Cardiac septum (tissue), 1 donor: ENCODE measurements at regions of chr1 and their contacts with region 1.

Region 1: GRCh38 chr1:110407260-110408210 is at the start of gene LAMTOR5:
- DNase-seq: peak; percentile 97
- total RNA-seq, gene LAMTOR5: 195 TPM

Region 2: DNA sequence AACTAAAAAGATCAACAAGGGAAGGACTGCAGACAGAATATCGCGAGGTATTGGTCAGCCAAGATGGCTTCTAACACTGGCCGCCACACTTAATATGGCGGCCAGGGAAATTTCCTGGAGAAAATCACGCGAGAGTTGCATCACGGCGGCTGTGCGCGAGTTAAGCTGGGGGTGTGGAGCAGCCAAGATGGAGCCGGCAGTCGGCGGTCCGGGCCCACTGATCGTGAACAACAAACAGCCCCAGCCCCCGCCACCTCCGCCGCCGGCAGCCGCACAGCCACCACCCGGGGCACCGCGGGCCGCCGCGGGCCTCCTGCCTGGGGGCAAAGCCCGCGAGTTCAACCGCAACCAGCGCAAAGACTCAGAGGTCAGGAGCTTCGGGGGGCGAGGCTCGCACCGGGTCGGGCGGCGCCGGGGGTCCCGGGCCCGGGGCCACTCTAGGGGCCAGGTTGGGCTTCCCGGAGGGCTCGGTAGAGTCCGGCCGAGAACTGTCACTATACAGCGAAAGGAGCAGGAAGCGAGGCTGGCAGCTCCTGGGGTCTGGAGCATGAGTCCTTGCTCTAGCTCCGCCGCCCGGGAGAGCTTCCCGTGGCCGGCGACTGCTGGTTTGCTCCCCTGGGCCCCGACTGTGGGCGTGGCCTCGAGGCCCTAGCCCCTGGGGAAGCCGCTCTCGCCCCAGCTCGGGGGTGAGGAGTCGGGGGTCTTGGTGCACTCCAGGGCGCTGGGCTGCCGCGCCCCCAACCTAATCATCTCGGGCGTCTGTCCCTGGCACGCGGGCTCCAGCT is 372.9 kb before region 1 on chr1 and contains the start of gene STRIP1:
- intact Hi-C with region 1: loop called (anchors 5 kb)
- DNase-seq: peak; percentile 96
- total RNA-seq, gene STRIP1: 23.8 TPM

Region 3: GRCh38 chr1:110338886-110339406 is 68.6 kb before region 1 on chr1 and contains the start of gene RBM15:
- intact Hi-C with region 1: loop called (anchors 2 kb)
- DNase-seq: peak; percentile 98
- total RNA-seq, gene RBM15: 22.7 TPM

Region 4: GRCh38 chr1:110449661-110450651 is 42.4 kb after region 1 on chr1:
- intact Hi-C with region 1: no loop called
- DNase-seq: peak; percentile 7